CD8-positive, alpha-beta memory T cell (primary cell): ENCODE measurements at regions of chr1 and their contacts with region 1.

Region 1: DNA sequence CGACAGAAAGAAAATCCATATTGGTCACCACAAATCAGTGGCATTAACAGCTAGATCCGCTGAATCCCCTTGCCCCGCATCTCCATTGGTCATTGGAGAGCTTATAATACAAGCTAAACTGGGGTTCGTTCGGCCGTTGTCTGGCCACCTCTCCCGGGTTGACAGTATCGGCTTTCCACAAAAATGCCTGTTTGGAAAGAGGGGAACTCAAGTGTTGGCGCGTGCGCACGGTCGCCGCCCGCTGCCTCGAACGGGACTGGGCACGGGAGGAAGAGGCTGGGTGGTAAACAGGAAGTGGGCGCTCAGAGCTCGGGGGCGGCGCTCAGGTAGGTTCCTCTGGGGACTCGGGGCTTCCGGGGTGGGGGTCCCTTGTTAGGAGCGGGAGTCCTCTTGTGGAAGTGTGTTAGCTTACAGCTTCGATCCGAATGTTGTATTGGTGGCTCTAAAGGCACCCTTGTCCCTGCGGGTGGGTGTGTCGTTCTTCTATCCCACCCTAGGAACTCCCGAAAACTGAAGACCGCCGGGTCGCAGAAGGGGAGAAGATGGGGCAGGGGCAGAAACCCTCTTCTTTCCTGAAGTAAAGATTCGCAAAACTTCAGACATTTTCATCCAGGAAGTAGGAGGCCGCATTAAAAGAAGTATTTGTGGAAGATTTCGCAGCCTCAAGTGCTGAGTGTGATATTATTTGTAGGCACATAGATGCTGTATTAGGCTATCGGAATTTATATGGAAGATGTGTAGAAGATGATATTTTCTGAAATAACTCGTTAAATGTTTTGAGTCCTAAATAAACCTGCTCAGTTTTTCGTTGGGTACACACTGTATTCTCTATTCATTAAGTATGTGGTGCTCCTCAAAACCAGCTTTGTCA is 962 bp downstream of the BROX start:
- DNase-seq: peak; percentile 89 to 95 (median 93)
- H3K4me3 ChIP-seq: peak overlapping the region; percentile 96
- H3K4me3 Mint-ChIP-seq: peak overlapping the region; percentile 92 to 99 (median 97)
- H3K27ac ChIP-seq: peak overlapping the region; percentile 92
- H3K27ac Mint-ChIP-seq: peak overlapping the region; percentile 99 to 100 (median 100)
- H3K4me1 ChIP-seq: peaks cover 26% of the 10 kb centered on the region
- H3K4me1 Mint-ChIP-seq: peaks cover 54 to 66% (median 64%) of the 10 kb centered on the region in 3 donors
- H3K27me3 ChIP-seq: no peaks in the 10 kb centered on the region
- H3K27me3 Mint-ChIP-seq: no peaks in the 10 kb centered on the region

Region 2: DNA sequence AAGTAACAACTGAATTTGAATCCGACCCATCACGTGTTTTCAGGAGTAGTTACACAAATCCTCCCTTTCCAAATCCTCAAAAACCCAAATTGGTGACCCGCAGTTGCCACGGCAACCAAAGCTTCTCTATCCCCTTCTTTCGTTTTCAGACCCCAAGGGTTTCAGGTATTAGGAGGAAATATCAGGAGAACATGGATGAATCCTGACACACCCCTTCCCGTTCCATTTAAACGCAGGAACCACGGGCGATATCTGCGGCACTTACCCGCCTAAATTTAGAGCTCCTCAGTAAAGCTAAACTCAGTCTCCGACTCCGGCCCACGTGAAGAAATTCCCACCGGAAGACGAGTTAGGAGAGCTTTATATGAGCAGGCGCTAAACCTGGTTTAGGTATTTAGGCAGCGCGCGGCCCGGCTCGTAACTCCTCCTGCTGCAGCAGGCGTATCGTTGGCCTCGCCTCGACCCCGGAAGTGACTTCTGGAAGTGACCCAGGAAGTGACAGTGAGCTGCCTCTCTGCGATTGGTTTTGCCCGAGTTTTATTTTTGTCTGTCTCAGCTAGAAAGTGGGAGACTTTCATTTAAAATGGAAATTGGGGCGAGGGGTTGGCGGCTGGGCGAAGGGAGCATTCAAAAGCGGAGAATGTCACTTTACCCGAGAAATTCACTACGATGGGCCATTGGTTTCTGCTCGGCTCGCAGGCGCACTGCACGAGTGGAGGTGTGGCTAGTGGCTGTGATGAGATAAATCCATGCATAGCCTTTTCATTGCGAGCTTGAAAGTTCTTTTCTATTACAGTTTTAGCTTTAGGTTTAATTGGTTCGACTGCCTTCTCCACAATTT is 123.6 kb before region 1 on chr1 and contains the start of gene TAF1A:
- CTCF ChIA-PET with region 1: no interaction called
- POLR2A ChIA-PET with region 1: interaction called, 11 read pairs
- DNase-seq: peak; percentile 82 to 93 (median 84)
- H3K4me3 ChIP-seq: peak within 1 kb of the TSS; percentile 77
- H3K4me3 Mint-ChIP-seq: peak within 1 kb of the TSS; percentile 96 to 100 (median 99)
- H3K27ac ChIP-seq: peak within 1 kb of the TSS; percentile 78
- H3K27ac Mint-ChIP-seq: peak within 1 kb of the TSS; percentile 92 to 100 (median 99)
- H3K4me1 ChIP-seq: peaks cover 21% of the 10 kb centered on the region
- H3K4me1 Mint-ChIP-seq: peaks cover 42 to 57% (median 55%) of the 10 kb centered on the region in 3 donors
- H3K27me3 ChIP-seq: no peaks in the 10 kb centered on the region
- H3K27me3 Mint-ChIP-seq: no peaks in the 10 kb centered on the region
- total RNA-seq, gene TAF1A: 21.3 to 22.9 TPM

Region 3: DNA sequence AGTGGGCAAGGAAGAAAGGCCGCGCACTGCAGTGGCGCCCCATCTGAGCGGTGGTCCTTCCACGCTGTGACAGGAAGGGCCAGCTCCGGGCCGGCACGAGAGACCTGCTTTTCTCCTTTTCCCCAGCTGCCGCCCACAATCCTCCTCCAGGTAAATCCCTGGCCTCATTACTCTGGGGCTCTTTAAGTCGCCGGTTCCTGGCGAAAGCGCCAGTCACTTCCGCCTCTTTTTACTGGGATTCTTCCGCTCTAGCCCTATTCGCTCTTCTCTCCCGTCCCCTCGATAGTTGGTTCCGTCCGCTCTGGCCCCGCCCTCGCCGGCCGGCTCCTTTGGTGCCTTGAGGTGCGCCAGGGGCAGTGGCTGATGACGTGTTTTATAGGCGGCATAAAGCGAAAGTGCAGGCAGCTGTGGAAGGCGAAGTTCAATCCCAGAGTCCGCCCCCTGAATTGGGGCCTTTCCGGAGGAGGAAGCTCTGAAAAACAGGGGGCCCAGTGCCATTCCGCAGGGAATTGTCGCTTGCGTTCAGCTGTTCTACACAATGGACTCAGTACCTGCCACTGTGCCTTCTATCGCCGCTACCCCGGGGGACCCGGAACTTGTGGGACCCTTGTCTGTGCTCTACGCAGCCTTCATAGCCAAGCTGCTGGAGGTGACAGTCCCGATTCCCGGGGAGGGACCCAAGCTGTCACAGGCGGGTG is 69.2 kb before region 1 on chr1:
- CTCF ChIA-PET with region 1: interaction called, 4 read pairs
- POLR2A ChIA-PET with region 1: interaction called, 50 read pairs
- DNase-seq: peak; percentile 96 to 99 (median 98)
- H3K4me3 ChIP-seq: peak overlapping the region; percentile 99
- H3K4me3 Mint-ChIP-seq: peak overlapping the region; percentile 92 to 100 (median 98)
- H3K27ac ChIP-seq: peak overlapping the region; percentile 99
- H3K27ac Mint-ChIP-seq: peak overlapping the region; percentile 97 to 100 (median 99)
- H3K4me1 ChIP-seq: peaks cover 20% of the 10 kb centered on the region
- H3K4me1 Mint-ChIP-seq: peaks cover 33 to 51% (median 50%) of the 10 kb centered on the region in 3 donors
- H3K27me3 ChIP-seq: no peaks in the 10 kb centered on the region
- H3K27me3 Mint-ChIP-seq: no peaks in the 10 kb centered on the region